ENCODE measurements at regions of chr7 and their contacts with region 1.

Region 1: DNA sequence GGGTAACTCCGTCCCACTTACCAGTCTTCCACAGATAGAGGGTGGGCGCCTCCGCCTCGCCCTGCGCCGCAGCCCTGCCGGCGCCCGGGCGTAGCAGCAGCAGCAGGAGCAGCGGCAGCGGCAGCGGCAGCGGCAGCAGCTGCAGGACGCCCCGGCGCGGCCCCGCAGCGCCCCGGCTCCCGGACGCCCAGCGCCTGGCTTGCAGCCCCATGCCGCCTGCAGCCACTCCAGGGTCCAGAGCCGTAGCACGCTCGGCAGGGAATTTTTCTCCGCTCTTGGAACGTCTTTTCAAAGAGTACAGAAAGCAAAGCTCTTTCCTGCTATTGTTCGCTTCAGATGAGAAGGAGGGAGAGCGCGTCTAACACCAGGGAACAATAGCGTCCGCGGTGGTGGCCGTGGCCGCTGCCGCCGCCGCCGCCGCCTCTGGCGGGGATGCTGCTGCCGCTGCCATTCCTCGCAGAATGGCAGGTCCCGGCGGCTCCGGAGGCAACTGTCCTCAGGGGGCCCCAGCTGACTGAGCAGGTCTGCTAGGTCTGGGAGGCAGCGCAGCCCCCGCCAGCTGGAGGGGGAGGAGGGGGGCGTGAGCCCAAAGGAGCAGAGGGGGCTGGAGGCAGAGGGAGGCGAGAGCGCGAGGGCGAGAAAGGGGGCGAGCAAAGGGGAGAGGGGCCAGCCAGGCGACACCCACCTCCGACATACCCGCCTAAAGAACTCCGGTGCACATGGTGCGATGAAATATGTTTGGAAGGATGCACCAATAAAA is at the start of gene THSD7A:
- DNase-seq: peak; percentile 92
- H3K4me3 ChIP-seq: peak within 1 kb of the TSS; percentile 68 to 69
- H3K27ac ChIP-seq: peak within 1 kb of the TSS in 1 of 2 experiments; percentile 99; a peak in 2 of 4 replicates
- H3K4me1 ChIP-seq: peaks cover 0 to 20% of the 10 kb centered on the region in 2 experiments; a peak in 2 of 4 replicates
- H3K27me3 ChIP-seq: no peaks in the 10 kb centered on the region
- CTCF ChIP-seq: 0 out of 2 replicates have a peak, but pooled peaks have one; percentile 9
- EP300 ChIP-seq: no peak
- RAD21 ChIP-seq: peak; percentile 10; the same call in 1 of the 2 replicates
- polyA plus RNA-seq, gene THSD7A: 0.16 and 0.49 TPM in 2 replicates

Region 2: DNA sequence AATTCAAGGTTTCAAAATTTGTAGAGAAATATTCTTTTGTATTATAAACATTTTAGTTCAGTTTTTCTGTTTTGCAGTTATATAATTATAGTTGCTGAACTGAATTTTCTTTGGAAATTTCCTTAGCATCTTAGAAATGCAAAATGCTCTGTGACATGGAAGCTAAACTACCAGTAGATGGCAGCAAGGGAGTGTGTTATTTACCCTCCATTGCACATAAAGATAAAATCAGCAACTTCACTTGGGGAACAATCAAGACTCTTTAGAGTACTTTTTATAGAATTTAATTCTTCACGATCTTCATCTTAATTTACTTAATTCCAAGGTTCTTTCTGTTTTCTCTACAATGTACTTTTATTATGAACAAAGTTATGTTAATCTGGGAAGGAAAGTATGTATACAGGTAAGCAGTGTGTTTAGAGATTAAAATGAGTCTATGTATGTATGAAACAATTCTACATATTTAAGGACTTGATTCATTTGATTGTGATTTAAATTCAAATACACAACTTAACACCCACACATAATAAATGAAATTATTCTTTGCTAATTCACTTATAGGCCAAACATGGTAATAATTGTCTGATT is 404.1 kb before region 1 on chr7:
- CTCF ChIA-PET with region 1: interaction called, 16 read pairs
- POLR2A ChIA-PET with region 1: interaction called, 4 read pairs
- DNase-seq: peak; percentile 76
- H3K4me3 ChIP-seq: no peak overlapping the region; a peak in 1 of 4 replicates
- H3K27ac ChIP-seq: peak overlapping the region in 1 of 2 experiments; percentile 60; a peak in 2 of 4 replicates
- H3K4me1 ChIP-seq: peaks cover 0 to 11% of the 10 kb centered on the region in 2 experiments; a peak in 2 of 4 replicates
- H3K27me3 ChIP-seq: no peaks in the 10 kb centered on the region
- CTCF ChIP-seq: peak; percentile 98
- EP300 ChIP-seq: no peak
- RAD21 ChIP-seq: peak; percentile 97

Region 3: GRCh38 chr7:11792166-11792565 is 39.8 kb before region 1 on chr7:
- CTCF ChIA-PET with region 1: interaction called, 15 read pairs
- POLR2A ChIA-PET with region 1: interaction called, 3 read pairs
- DNase-seq: no peak
- H3K4me3 ChIP-seq: no peak overlapping the region
- H3K27ac ChIP-seq: peak overlapping the region in 1 of 2 experiments; percentile 86; a peak in 2 of 4 replicates
- H3K4me1 ChIP-seq: peaks cover 0 to 30% of the 10 kb centered on the region in 2 experiments; a peak in 2 of 4 replicates
- H3K27me3 ChIP-seq: no peaks in the 10 kb centered on the region
- CTCF ChIP-seq: no peak
- EP300 ChIP-seq: no peak
- RAD21 ChIP-seq: no peak

Region 4: GRCh38 chr7:11846361-11846955 is 14.5 kb after region 1 on chr7:
- CTCF ChIA-PET with region 1: interaction called, 11 read pairs
- POLR2A ChIA-PET with region 1: no interaction called
- DNase-seq: no peak
- H3K4me3 ChIP-seq: no peak overlapping the region
- H3K27ac ChIP-seq: peak overlapping the region in 1 of 2 experiments; percentile 28; a peak in 2 of 4 replicates
- H3K4me1 ChIP-seq: peaks cover 0 to 2% of the 10 kb centered on the region in 2 experiments; a peak in 1 of 4 replicates
- H3K27me3 ChIP-seq: no peaks in the 10 kb centered on the region
- CTCF ChIP-seq: no peak
- EP300 ChIP-seq: no peak
- RAD21 ChIP-seq: no peak

Region 5: DNA sequence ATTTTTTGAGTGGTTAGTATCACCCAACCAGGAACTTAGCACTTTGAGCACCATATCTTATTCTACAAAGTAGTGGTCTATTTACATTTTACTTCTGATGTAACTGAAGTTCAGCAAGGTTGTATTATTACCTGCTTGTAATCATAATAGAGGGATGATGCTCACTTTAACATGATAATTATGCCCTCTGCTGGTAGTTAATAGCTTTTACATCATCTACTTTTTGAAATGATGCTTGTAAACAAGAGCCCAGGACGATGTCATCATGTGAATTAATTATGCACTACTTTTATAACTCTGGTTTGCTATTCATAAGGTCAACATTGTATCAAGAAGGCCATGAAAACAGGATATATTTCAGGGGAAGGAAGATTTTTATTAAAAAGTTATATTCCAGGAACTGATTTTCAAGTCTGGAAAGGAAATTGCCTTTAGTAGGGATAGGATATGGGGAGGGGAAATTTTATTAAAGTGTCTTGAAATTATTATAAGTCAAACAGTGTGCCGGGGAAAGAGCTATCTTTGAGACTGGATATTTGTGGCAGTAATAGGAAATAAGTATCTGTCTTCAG is 658.3 kb after region 1 on chr7:
- CTCF ChIA-PET with region 1: interaction called, 11 read pairs
- POLR2A ChIA-PET with region 1: no interaction called
- DNase-seq: peak; percentile 59
- H3K4me3 ChIP-seq: no peak overlapping the region
- H3K27ac ChIP-seq: no peak overlapping the region
- H3K4me1 ChIP-seq: no peaks in the 10 kb centered on the region; a peak in 1 of 4 replicates
- H3K27me3 ChIP-seq: no peaks in the 10 kb centered on the region
- CTCF ChIP-seq: peak; percentile 82
- EP300 ChIP-seq: no peak
- RAD21 ChIP-seq: peak; percentile 74

Measured in SK-N-SH (cell line).